ENCODE measurements at regions of chr6 and their contacts with region 1.

Region 1: GRCh38 chr6:37308069-37308815 is 45.5 kb upstream of the RNF8 start:
- DNase-seq: no peak
- ATAC-seq: no peak
- H3K4me3 ChIP-seq: no peak overlapping the region
- H3K4me3 Mint-ChIP-seq: no peak overlapping the region
- H3K27ac ChIP-seq: no peak overlapping the region
- H3K27ac Mint-ChIP-seq: no peak overlapping the region
- H3K4me1 ChIP-seq: peaks cover 0 to 4% of the 10 kb centered on the region in 2 donors
- H3K4me1 Mint-ChIP-seq: peaks cover 4% of the 10 kb centered on the region
- H3K27me3 ChIP-seq: no peaks in the 10 kb centered on the region
- H3K27me3 Mint-ChIP-seq: no peaks in the 10 kb centered on the region
- CTCF ChIP-seq: no peak

Region 2: DNA sequence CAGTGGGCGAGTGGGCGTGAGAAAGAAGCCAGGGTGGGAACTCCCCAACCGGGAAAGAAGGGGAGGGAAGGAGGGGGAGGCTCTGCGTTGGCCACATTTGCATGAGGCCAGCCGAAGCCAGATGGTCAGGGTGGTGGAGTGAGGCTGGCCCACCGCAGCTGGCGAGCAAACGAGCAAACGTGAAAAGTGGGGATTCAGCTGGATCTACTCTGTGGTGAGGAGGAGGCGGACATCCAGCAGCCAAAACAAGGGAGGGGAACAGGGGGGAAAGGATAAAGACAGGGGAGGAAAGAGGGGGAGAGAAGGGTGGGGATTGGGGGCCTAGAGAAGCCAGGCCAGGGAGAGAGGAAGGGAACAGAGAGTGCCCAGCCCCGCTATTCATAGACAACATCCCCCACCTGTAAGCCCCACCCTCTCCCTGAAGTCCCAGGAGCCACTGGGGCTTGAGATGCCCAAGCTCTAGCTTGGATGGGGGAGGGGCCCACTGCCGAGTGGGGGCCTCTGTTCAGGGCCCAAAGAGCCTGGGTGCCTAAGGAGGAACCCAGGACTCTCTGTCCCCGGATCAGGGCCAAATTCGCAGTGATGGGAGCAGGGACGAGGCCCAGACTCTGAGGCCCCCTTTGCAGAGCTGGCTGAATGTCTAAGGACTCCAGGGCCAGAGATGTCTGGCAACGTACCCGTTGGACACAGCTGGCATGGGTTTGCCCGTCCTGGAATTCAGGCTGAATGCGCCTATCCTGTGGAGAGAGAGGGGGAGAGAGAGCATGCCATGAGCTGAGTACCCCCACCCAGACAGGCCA is 514.1 kb before region 1 on chr6:
- CTCF ChIA-PET with region 1: no interaction called
- POLR2A ChIA-PET with region 1: no interaction called
- intact Hi-C with region 1: no loop called
- DNase-seq: no peak
- ATAC-seq: no peak
- H3K4me3 ChIP-seq: no peak overlapping the region
- H3K4me3 Mint-ChIP-seq: no peak overlapping the region
- H3K27ac ChIP-seq: no peak overlapping the region
- H3K27ac Mint-ChIP-seq: no peak overlapping the region
- H3K4me1 ChIP-seq: no peaks in the 10 kb centered on the region
- H3K4me1 Mint-ChIP-seq: no peaks in the 10 kb centered on the region
- H3K27me3 ChIP-seq: peaks cover 0 to 32% (median 4%) of the 10 kb centered on the region in 4 experiments
- H3K27me3 Mint-ChIP-seq: peaks cover 25% of the 10 kb centered on the region
- CTCF ChIP-seq: no peak

Region 3: GRCh38 chr6:37324131-37325033 is 16.1 kb after region 1 on chr6:
- CTCF ChIA-PET with region 1: interaction called, 18 read pairs
- POLR2A ChIA-PET with region 1: no interaction called
- intact Hi-C with region 1: no loop called
- DNase-seq: no peak
- ATAC-seq: no peak
- H3K4me3 ChIP-seq: no peak overlapping the region
- H3K4me3 Mint-ChIP-seq: no peak overlapping the region
- H3K27ac ChIP-seq: no peak overlapping the region
- H3K27ac Mint-ChIP-seq: no peak overlapping the region
- H3K4me1 ChIP-seq: no peaks in the 10 kb centered on the region
- H3K4me1 Mint-ChIP-seq: peaks cover 2% of the 10 kb centered on the region
- H3K27me3 ChIP-seq: no peaks in the 10 kb centered on the region
- H3K27me3 Mint-ChIP-seq: no peaks in the 10 kb centered on the region
- CTCF ChIP-seq: no peak